Panc1 (cell line): ENCODE measurements at regions of chr17 and their contacts with region 1.

Region 1: DNA sequence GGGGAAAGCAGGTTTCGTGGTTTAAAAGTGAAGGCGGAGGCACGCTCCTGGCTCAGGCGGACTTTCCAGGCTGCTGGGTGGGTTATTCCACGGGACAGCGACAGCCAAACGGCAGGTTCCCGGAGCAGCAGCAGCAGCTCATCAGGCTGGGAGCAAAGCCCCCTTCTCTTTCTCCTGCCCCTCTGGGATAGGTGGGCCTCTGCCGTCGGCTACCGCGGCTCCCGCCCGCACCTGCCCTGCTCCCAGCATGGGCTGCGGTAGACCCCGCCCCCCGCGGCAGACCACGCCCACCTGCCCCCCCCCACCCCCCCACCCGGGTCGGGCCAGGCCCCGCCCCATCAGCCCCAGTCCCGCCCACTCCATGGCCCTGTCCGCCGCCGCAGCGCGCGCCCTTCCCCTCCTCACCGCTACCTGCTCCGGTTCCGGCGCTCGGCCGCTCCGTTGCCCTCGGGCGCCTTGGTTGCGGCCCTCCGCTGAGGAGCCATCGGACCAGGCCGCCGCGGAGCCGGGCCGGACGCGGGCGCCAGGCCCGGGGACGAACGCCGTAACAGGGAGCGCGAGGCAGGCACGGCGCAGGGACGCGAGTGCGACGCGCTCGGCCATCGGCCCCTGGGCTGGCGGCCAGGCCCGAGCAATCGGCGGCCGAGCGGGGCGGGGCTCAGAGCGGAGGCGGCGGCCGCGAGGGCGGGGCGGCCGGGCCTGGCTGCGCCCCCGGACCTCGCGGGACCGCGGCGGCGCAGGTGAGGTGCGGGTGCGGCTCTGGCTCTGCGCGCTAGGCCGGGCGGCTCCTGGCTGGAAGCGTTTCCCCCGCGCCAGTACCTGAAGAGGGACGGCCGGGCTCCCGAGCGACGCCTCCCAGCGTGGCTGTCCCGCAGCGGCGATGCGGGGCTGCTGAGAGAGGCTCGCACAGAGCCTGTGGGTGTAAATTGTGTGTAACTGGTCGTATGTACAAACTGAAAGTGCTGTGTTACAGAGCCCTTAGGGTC is at the starts of genes HEXD and OGFOD3:
- DNase-seq: no peak
- ATAC-seq: peak; percentile 94
- H3K4me3 ChIP-seq: peak within 1 kb of the TSS; percentile 86 to 98
- H3K27ac ChIP-seq: peak within 1 kb of the TSS; percentile 86
- H3K4me1 ChIP-seq: peaks cover 15% of the 10 kb centered on the region
- H3K27me3 ChIP-seq: no peaks in the 10 kb centered on the region
- CTCF ChIP-seq: no peak
- total RNA-seq, gene HEXD: 25.6 TPM
- total RNA-seq, gene OGFOD3: 53.9 TPM

Region 2: DNA sequence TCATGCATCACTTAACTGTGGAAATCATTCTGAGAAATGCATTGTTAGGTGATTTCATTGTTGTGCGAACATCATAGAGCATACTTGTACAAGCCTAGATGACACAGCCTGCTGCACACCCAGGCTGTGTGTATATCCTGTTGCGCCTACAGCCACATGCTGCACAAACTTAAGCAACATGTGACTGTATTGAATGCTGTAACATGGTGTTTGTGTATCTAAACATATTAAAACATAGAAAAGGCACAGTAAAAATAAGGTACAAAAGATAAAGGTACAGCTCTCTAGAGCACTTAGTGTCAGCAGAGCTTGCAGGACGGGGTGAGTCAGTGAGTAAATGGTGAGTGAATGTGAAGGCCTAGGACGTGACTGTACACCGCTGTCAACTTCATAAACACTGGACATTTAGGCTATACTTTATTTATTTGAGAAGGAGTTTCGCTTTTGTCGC is 113.2 kb after region 1 on chr17:
- CTCF ChIA-PET with region 1: interaction called, 10 read pairs
- POLR2A ChIA-PET with region 1: interaction called, 11 read pairs
- in situ Hi-C with region 1: no loop called
- intact Hi-C with region 1: no loop called
- DNase-seq: peak; percentile 36
- ATAC-seq: peak; percentile 62
- H3K4me3 ChIP-seq: no peak overlapping the region
- H3K27ac ChIP-seq: peak overlapping the region; percentile 62
- H3K4me1 ChIP-seq: peaks cover 80% of the 10 kb centered on the region
- H3K27me3 ChIP-seq: no peaks in the 10 kb centered on the region
- CTCF ChIP-seq: no peak

Region 3: DNA sequence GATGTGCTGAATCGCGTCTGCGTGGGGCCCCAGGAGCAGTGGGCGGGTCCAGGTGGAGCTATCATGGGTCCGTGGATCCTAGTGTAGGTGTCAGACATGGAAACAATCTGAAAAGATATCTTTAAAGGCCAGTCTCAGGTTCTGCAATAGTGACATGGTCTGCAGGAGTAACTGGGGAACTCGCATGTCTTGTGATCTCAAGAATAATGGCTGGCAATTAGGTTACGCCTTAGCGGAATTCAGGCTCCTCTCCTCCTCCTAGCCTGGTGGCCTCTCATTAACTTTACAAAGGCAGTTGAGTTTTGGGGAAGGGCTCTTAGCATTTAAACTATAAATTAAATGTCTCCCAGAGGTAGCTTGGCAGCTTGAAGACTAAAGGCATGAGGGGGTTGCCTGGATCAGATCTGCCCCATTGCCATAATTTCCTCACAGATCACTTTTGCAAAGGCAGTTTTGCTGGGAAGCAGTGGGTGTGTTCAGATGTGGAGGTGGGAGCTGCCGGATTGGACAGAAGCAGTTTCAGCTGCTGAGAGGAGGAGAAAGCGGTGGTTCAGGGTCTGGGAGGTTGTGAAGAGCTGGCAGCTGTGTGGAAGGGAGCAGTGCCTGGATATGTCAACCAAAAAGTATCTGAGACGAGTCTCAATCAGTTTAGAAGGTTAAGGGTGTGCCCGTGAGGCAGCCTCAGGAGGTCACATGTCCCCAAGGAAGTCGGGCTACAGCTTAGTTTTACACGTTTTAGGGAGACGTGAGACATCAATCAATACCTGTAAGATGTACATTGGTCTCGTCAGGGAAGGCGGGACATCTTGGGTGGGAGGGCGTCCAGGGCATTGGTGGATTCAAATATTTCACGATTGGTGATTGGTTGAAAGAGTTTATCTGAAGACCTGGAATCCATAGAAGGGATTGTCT is 336.3 kb after region 1 on chr17:
- CTCF ChIA-PET with region 1: no interaction called
- POLR2A ChIA-PET with region 1: no interaction called
- in situ Hi-C with region 1: no loop called
- intact Hi-C with region 1: no loop called
- DNase-seq: no peak
- ATAC-seq: peak; percentile 54
- H3K4me3 ChIP-seq: peak overlapping the region; percentile 23 to 37
- H3K27ac ChIP-seq: peak overlapping the region; percentile 91
- H3K4me1 ChIP-seq: peaks cover 24% of the 10 kb centered on the region
- H3K27me3 ChIP-seq: no peaks in the 10 kb centered on the region
- CTCF ChIP-seq: no peak